Right ventricle myocardium inferior (tissue), 1 donor: ENCODE measurements at regions of chr3 and their contacts with region 1.

Region 1: GRCh38 chr3:24582431-24583403 is 88.1 kb upstream of the THRB start:
- DNase-seq: no peak
- ATAC-seq: peak; percentile 60

Region 2: GRCh38 chr3:23999012-23999641 is 583.6 kb before region 1 on chr3:
- intact Hi-C with region 1: loop called (anchors 5 kb)
- DNase-seq: peak; percentile 73
- ATAC-seq: no peak

Region 3: GRCh38 chr3:24264748-24265158 is 318.0 kb before region 1 on chr3:
- intact Hi-C with region 1: loop called (anchors 5 kb)
- DNase-seq: no peak
- ATAC-seq: no peak

Region 4: DNA sequence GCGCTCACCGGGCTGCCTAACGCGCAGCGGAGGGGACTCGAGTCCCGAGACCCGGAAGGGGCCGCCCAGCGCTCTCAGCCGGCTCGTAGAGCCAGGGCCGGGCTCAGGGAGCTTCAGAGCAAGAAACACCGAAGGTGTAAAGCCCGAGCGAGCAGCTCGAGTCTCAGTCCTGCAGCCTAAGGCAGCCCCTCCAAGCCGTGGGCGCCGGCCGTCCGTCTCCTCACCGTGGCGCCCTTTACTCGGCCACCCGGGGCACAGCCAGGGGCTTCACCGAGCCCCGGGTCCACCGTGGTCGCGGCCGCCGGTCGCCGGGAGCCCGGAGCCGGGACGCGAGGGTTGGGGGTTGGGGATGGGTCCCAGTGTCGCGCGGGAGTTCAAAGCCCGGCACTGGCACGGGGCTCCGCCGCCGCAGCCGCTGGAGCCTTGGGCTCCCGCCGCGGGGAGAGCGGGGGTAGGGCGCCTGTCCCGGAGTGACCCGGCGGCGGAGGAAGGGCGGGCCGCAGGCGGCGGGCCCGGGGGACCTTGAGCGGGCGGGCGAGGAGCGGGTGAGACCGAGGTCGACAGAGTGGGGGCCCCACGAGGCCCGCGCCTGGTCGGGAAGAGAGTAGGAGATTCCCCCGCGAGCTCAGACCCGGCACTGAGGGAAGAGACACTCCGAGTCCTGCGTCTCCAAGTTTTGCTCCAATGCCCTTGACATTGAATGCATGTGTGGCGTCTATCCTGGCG is 61.1 kb before region 1 on chr3:
- intact Hi-C with region 1: loop called (anchors 2 kb)
- DNase-seq: peak; percentile 78
- ATAC-seq: peak; percentile 94

Region 5: DNA sequence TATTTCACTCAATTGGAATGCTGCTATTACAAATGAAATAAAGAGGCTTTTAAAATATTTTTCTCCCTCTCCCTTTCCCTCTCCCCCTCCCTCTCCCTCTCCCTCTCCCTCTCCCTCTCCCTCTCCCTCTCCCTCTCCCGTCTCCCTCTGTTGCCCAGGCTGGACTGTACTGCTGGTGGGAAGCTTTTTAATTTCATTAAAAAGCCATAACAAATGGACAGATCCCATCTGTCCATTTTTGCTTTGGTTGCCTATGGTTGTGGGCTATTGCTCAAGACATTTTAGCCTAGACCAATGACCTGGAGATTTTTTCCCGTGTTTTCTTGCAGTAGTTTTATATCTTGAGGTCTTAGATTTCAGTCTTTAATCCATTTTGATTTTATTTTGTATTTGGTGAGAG is 1932.6 kb after region 1 on chr3:
- intact Hi-C with region 1: no loop called
- DNase-seq: no peak
- ATAC-seq: no peak